BJ (cell line): ENCODE measurements at regions of chr11 and their contacts with region 1.

Region 1: GRCh38 chr11:102144357-102145342 is 34.4 kb downstream of the YAP1 start:
- DNase-seq: no peak
- H3K4me3 ChIP-seq: no peak overlapping the region
- H3K27me3 ChIP-seq: no peaks in the 10 kb centered on the region
- CTCF ChIP-seq: no peak

Region 2: DNA sequence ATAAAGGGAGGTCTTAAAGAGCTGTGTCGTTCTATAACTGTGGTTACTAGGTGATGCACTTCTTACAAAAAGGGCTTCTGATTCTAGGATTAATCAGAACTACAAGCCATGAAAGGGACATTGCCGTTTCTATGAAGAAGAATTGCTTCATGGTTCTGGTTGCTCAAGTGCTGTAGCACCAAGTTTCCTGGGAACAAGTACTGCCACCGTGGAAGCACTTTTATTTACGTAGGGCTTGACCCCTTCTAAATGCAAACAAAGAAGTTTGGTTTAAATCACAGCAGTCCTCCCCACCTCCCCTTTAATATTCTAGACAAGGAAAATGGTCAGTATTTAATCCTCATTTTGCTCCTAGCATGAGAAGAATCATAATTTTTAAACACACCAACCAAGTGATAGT is 24.7 kb before region 1 on chr11:
- CTCF ChIA-PET with region 1: no interaction called
- POLR2A ChIA-PET with region 1: interaction called, 12 read pairs
- DNase-seq: no peak
- H3K4me3 ChIP-seq: no peak overlapping the region
- H3K27me3 ChIP-seq: no peaks in the 10 kb centered on the region
- CTCF ChIP-seq: no peak